ENCODE measurements at regions of chr1 and their contacts with region 1.

Region 1: DNA sequence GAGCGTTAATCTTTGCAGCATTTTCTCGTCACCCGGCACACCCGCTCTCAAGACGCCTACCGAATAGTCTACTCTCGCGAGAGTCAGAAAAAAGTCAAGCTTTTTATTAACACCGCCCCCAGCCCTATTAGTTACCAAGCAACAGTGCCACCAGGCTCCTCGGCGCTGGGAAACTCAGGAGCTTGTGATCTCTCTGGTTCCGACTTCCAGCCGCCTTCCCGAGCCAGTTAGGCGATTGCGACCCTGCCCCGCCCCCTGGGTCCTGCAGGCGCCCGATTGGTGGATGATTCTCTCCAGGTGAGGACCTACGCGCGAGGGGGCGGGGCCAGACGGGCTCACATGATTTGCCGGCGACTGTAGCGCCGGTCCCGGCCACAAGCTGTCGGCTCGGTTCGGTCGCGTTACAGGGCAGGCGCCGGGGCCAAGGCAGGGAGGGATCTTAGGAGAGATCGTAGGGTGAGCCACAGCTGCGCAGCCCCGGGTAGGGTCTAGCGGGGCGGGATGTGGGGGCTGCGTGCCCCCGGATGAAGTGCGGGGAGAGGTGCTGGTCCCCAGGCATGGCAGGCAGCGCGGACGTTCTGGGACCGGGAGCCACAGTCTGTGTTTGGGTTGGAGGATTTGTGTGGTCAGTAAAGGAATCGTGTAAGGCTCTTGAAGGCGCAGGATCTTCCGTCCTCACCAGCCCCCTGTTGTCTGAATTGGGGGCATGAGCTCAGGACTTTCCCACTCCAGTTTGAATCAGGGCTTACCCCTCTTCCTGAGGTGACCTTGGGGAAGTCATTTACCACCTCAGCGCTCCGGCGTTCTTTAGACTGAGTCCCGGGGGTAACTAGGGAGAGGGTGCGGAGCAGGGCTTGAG is at the start of gene PFKFB2:
- DNase-seq: peak; percentile 93
- H3K4me3 Mint-ChIP-seq: peak within 1 kb of the TSS; percentile 79
- H3K27ac Mint-ChIP-seq: peak within 1 kb of the TSS; percentile 71
- H3K4me1 Mint-ChIP-seq: peaks cover 51% of the 10 kb centered on the region
- H3K27me3 Mint-ChIP-seq: peaks cover 22% of the 10 kb centered on the region
- total RNA-seq, gene PFKFB2: 1.5 to 1.7 TPM

Region 2: GRCh38 chr1:206967096-206967849 is 85.9 kb before region 1 on chr1:
- CTCF ChIA-PET with region 1: no interaction called
- POLR2A ChIA-PET with region 1: no interaction called
- DNase-seq: no peak
- H3K4me3 Mint-ChIP-seq: no peak overlapping the region
- H3K27ac Mint-ChIP-seq: peak overlapping the region; percentile 56
- H3K4me1 Mint-ChIP-seq: peaks cover 36% of the 10 kb centered on the region
- H3K27me3 Mint-ChIP-seq: peaks cover 25% of the 10 kb centered on the region

Region 3: DNA sequence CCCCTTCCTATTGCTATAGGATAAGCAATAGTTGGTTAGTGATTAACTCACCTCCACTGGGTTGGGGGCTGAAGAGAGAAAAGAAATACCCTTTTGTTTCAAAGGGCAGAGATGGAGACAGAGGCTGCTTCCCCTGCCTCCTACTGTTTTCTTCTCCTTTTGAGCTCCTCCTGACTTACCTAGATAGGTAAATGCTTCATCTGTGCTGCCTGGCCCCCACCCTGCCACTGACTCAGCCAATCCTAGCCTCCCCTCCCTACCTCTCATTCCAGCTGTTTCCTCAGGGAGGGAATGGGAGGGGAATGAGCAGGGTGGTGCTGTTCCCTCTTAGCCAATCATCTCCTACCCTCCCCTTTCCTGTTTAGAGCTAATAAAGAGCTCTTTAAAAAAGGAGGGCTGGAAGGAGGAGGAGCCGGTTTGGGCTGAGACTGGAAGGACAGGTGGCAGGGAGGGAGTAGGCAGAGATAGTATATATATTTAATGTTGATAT is 20.6 kb before region 1 on chr1 and contains the start of gene C1orf116:
- CTCF ChIA-PET with region 1: interaction called, 11 read pairs
- POLR2A ChIA-PET with region 1: no interaction called
- DNase-seq: no peak
- H3K4me3 Mint-ChIP-seq: no peak within 1 kb of the TSS
- H3K27ac Mint-ChIP-seq: no peak within 1 kb of the TSS
- H3K4me1 Mint-ChIP-seq: peaks cover 3% of the 10 kb centered on the region
- H3K27me3 Mint-ChIP-seq: peaks cover 60% of the 10 kb centered on the region
- total RNA-seq, gene C1orf116: 0.08 TPM in 1 of 2 experiments, not detected in the other

Region 4: DNA sequence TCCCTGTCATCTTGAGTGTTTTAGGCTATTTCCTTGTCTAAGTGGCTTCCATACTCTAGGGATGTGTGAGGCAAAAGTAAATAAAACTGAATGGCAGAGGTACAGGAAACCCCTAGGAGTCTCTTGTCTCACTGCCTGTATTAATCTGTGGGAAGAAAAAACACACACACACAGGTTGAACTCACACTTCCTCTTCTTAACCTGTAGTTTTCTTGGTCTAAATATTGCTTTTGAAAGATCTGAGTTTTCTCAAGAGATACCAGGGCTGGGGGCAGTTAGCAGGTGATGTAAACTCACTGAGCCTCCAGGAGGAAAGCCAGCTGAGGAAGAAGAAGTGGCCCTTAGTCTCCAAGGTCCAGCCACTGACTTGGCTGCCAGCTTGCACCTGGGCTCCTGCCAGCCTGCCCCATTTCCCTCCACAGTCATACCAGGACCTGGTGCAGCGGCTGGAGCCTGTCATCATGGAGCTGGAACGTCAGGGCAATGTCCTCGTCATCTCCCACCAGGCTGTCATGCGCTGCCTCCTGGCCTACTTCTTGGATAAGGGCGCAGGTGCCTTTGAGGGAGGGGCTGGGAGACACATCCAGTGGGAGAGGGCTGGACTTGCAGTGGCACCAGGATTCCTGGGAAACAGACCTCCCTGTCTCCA is 16.8 kb after region 1 on chr1:
- CTCF ChIA-PET with region 1: interaction called, 15 read pairs
- POLR2A ChIA-PET with region 1: interaction called, 16 read pairs
- DNase-seq: no peak
- H3K4me3 Mint-ChIP-seq: no peak overlapping the region
- H3K27ac Mint-ChIP-seq: no peak overlapping the region
- H3K4me1 Mint-ChIP-seq: peaks cover 26% of the 10 kb centered on the region
- H3K27me3 Mint-ChIP-seq: peaks cover 15% of the 10 kb centered on the region

Region 5: DNA sequence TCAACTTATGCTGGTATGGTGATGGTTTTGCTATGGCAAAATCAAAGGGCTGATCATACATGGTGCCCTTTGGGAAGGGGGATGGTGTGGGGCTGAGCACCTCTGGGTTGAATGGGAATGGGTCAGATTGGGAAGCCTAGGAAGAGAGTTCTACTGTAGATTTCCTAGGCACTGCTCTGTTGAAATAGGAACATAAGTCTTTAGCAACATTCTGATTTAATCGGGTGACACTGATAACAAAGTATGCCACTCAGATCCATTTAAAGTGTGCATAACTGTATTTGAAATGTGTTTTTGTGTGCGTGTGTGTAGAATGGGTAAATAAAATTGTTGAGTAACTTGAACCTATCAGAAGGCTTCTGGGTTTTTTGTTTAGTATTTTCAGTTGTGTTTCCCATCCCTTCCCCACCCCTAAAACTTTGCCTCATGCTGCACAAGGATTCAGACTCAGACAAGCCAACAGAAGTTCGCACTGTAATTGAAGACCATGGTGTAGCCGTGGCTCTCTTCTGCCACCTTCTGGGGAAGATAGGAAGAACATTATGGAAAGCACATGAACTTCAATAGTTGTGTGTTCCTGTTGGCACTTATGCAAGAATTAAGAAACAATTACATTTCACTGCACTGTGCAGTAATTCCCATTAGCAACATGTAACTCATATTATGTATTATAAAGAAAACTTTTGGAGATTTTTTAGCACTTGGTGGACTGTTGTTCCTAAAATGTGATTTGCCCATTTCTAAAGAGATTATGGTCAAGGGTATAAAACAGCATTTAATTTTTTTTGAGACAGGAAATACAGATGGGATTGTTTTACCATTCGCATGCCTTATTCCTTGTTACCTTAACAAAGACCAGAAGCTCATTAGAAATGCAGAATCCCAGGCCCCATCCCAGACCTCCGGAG is 24.6 kb after region 1 on chr1:
- CTCF ChIA-PET with region 1: interaction called, 23 read pairs
- POLR2A ChIA-PET with region 1: interaction called, 5 read pairs
- DNase-seq: peak; percentile 70
- H3K4me3 Mint-ChIP-seq: no peak overlapping the region
- H3K27ac Mint-ChIP-seq: no peak overlapping the region
- H3K4me1 Mint-ChIP-seq: peaks cover 1% of the 10 kb centered on the region
- H3K27me3 Mint-ChIP-seq: peaks cover 47% of the 10 kb centered on the region

Region 6: DNA sequence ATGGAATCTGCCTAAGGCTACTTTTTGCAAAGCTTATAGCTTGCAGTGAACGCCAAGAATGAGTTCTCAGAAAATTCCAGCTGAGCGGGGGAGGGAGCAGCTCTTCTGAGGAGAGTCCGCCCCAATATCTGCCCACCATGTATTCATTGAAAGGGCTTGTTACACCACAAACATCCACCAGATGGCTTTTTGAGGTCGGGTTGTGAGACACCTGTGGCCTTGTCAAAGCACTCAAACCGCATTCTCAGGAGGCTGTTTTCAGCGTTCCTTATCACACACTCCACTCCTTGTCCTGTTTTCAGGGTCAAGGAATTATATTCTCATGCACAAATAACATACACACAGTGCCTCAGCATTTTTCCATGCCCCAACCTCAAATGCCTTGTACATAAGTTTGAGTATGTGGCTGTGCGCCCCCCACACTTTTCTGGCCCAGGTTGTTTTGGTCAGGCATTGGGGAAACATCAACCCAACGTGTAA is 31.6 kb after region 1 on chr1:
- CTCF ChIA-PET with region 1: interaction called, 20 read pairs
- POLR2A ChIA-PET with region 1: interaction called, 3 read pairs
- DNase-seq: peak; percentile 59
- H3K4me3 Mint-ChIP-seq: no peak overlapping the region
- H3K27ac Mint-ChIP-seq: no peak overlapping the region
- H3K4me1 Mint-ChIP-seq: peaks cover 18% of the 10 kb centered on the region
- H3K27me3 Mint-ChIP-seq: peaks cover 45% of the 10 kb centered on the region

Region 7: DNA sequence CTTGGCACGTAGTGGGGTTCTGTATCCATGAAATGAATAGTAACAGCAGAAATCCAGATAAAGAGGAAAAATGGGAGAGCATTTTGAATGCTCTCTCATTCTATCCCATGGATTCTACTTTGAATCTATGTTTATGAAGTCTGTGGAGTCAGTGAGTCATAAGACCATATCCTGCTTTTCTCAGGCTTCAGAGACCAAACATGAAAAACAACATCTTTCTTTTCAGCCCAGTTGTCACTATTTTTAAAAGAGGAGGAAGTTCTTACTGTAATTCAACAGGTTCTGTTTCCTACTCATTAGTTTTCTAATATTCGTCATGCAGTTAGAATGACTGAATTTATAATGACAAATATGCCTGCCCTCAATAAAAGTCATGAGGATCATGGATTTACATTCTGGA is 228.9 kb after region 1 on chr1:
- CTCF ChIA-PET with region 1: no interaction called
- POLR2A ChIA-PET with region 1: no interaction called
- DNase-seq: no peak
- H3K4me3 Mint-ChIP-seq: no peak overlapping the region
- H3K27ac Mint-ChIP-seq: no peak overlapping the region
- H3K4me1 Mint-ChIP-seq: peaks cover 30% of the 10 kb centered on the region
- H3K27me3 Mint-ChIP-seq: peaks cover 7% of the 10 kb centered on the region

Measured in activated CD4-positive, alpha-beta memory T cell treated with anti-CD3 and anti-CD28 coated beads, Interleukin-2, amount 10 ng/mL, durations not matched to agents 7 days and 5 days (primary cell).